ENCODE measurements at regions of chr3 and their contacts with region 1.

Region 1: GRCh38 chr3:111668912-111669488 is 73.9 kb upstream of the ZBED2 start:
- DNase-seq: no peak
- H3K4me3 Mint-ChIP-seq: no peak overlapping the region
- H3K27ac Mint-ChIP-seq: peak overlapping the region; percentile 48
- H3K4me1 Mint-ChIP-seq: peaks cover 80% of the 10 kb centered on the region
- H3K27me3 Mint-ChIP-seq: no peaks in the 10 kb centered on the region

Region 2: GRCh38 chr3:111577794-111578685 is 91.0 kb before region 1 on chr3:
- CTCF ChIA-PET with region 1: interaction called, 10 read pairs
- POLR2A ChIA-PET with region 1: interaction called, 4 read pairs
- DNase-seq: no peak
- H3K4me3 Mint-ChIP-seq: no peak overlapping the region
- H3K27ac Mint-ChIP-seq: peak overlapping the region; percentile 68
- H3K4me1 Mint-ChIP-seq: peaks cover 67% of the 10 kb centered on the region
- H3K27me3 Mint-ChIP-seq: no peaks in the 10 kb centered on the region

Region 3: DNA sequence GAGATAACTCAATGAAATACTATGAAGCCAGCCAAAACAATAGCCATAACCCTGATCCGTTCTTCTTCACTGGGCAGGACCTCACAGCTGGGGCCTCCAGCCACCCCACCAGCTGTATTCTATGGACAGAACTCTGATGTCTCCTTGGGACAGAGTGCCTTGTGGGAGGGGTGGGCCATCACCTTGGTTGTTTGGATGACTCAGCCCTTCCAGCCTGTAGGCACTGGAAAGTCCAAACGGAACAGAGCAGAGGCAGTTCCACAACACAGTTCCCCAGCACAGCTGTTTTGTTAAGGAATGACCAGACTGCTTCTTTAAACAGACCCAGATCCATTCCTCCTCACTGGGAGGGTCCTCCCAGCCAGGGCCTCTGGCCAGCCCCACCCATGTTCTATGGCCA is 41.9 kb before region 1 on chr3:
- CTCF ChIA-PET with region 1: no interaction called
- POLR2A ChIA-PET with region 1: no interaction called
- DNase-seq: no peak
- H3K4me3 Mint-ChIP-seq: no peak overlapping the region
- H3K27ac Mint-ChIP-seq: no peak overlapping the region
- H3K4me1 Mint-ChIP-seq: peaks cover 8% of the 10 kb centered on the region
- H3K27me3 Mint-ChIP-seq: no peaks in the 10 kb centered on the region

Region 4: DNA sequence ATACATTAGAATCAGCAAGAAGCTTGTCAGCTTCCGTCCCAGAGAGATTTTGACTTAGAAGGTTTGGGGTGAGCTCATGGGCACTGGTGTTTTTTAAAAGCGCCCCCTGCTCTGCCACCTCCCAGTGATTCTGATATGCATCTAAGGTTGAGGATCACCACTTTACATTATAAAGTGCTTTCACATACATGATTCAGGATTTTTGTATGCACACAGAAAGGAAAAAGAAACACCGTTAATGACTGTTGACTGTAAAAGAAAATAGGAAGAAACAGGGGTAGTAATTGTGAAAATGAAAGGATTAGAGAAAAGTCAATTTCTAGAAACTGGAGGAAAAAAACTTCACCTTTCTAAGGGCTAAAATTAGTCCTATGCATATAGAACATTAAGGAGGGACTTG is 31.1 kb after region 1 on chr3:
- CTCF ChIA-PET with region 1: interaction called, 10 read pairs
- POLR2A ChIA-PET with region 1: interaction called, 5 read pairs
- DNase-seq: no peak
- H3K4me3 Mint-ChIP-seq: peak overlapping the region; percentile 35
- H3K27ac Mint-ChIP-seq: peak overlapping the region; percentile 64
- H3K4me1 Mint-ChIP-seq: peaks cover 23% of the 10 kb centered on the region
- H3K27me3 Mint-ChIP-seq: no peaks in the 10 kb centered on the region

Region 5: GRCh38 chr3:111859974-111860859 is 191.2 kb after region 1 on chr3:
- CTCF ChIA-PET with region 1: interaction called, 19 read pairs
- POLR2A ChIA-PET with region 1: interaction called, 5 read pairs
- DNase-seq: peak; percentile 72
- H3K4me3 Mint-ChIP-seq: peak overlapping the region; percentile 87
- H3K27ac Mint-ChIP-seq: peak overlapping the region; percentile 61
- H3K4me1 Mint-ChIP-seq: peaks cover 18% of the 10 kb centered on the region
- H3K27me3 Mint-ChIP-seq: peaks cover 38% of the 10 kb centered on the region

Region 6: GRCh38 chr3:111978493-111979433 is 309.8 kb after region 1 on chr3 and contains the start of gene ABHD10:
- CTCF ChIA-PET with region 1: interaction called, 18 read pairs
- POLR2A ChIA-PET with region 1: interaction called, 10 read pairs
- DNase-seq: peak; percentile 97
- H3K4me3 Mint-ChIP-seq: peak within 1 kb of the TSS; percentile 75
- H3K27ac Mint-ChIP-seq: peak within 1 kb of the TSS; percentile 92
- H3K4me1 Mint-ChIP-seq: peaks cover 42% of the 10 kb centered on the region
- H3K27me3 Mint-ChIP-seq: no peaks in the 10 kb centered on the region
- total RNA-seq, gene ABHD10: 40.4 to 44.7 TPM